Head of caudate nucleus (tissue), 42 donors: ENCODE measurements at regions of chr12 and their contacts with region 1.

Region 1: DNA sequence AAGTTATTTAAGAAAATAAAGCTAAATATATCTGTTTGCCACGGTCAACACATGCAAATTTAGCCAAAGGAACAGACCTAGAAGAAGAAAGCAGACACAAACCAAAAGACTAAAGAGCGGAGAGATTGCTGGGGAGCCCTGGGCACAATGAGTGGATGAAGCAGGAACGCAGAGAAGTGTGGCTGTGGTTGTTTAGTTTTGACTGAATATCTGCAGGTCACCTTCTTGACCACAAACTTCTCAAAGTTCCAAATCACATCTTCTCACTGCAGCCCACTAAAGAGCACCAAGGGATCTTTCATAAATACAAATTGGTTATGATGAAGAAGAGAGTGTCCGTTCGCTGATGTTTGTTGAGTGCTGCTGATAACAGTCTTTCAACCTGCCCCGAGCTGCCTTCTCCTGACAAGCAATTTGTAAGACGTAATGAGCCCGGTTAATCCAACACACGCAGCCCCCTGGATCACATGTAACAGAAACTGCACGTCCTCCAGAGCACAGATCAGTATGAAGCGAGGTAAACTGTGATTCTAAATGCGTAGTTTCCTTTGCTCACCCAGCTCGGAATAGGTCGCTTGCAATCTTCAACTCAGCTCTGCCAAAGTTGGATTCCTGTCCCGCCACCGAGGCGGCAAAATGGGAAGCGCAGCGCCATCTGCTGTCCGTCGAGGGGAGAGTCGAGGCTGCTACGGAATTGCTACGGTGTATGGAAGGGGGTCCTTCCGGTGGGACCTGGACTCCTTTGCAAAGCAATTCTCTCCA is 120.8 kb downstream of the GXYLT1 start:
- DNase-seq: peak; percentile 38 to 92 (median 81)

Region 2: DNA sequence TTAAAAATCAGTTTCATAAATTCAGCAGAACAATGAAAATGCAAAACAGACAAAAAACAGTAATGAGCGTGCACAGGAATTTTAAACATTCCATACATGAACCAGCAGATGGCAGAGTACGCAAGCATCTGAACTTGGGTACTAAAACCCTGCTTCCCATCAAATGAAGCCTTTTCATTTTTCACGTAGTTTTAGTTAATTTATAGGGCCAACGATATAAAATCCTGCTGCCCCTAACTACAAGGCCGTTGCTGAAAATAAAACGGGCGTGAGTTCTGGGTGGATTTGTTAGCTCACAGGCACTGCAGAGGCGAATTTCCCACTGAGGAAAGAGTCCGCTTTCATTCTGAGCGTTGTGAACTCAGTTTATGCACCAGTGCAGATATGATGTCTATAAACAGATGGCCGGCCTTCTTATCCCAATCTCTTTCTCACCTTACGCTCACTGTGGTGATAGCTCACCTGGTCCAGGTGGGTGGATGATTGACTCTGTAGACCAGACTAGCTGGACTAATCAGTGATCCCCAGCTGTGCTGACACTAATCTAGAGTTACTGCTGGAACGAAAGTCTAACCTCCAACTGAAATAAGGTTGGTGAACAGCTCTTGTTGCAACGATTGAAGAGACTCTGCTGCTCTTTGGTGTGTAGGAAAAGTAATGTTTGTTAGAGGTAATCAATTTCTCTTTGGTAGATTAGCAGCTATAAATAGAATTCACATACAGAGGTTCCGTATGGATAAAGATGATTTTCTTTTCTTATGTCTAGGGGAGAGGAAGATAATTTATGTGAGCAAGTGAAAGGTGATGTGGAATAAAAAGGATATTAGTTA is 746.6 kb before region 1 on chr12:
- intact Hi-C with region 1: loop called (anchors 5 kb)
- DNase-seq: peak in 34 of 42 donors; percentile 2 to 74 (median 46)